ENCODE measurements at regions of chr2 and their contacts with region 1.

Region 1: GRCh38 chr2:222707689-222708525 is 36.4 kb downstream of the MOGAT1 start:
- DNase-seq: peak; percentile 62
- H3K4me3 ChIP-seq: no peak overlapping the region; a peak in 1 of 4 replicates
- H3K27ac ChIP-seq: peak overlapping the region in 1 of 2 experiments; percentile 21; a peak in 2 of 4 replicates
- H3K4me1 ChIP-seq: peaks cover 3 to 6% of the 10 kb centered on the region in 2 experiments; a peak in 2 of 4 replicates
- H3K27me3 ChIP-seq: no peaks in the 10 kb centered on the region
- CTCF ChIP-seq: peak; percentile 99
- EP300 ChIP-seq: no peak
- RAD21 ChIP-seq: peak; percentile 83

Region 2: DNA sequence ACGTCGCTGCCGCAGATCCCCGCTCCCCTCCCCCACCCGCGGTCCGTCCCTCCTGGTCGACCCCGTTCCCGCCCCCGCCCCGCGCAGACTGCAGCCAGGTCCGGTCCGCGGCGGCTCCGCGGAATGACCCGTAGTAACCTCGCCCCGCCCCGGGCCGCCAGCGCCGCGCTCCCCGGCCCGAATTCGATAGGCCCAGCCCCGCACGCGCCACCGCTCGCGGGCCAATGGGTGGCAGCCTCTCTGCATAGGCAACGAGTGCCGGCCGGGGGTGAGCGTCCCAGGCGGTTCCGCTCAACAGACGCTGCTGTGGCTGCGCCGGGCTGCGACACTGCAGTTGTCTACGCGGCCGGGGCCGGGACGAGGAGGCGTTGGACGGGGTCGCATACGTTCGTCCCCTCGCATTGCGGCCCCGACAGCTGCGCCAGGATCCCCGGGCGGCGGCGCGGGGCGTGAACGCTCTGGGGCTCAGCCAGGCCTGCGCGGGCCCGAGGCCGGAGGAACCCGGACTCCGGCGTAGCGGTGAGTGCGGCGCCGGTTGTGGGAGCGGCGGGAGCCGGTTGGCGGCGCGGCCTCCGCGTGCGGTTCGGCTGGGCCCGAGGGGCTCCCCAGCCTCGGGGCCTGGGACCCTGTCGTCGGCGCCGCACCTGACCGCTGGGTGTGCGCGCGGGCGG is 153.0 kb after region 1 on chr2 and contains the start of gene ACSL3:
- CTCF ChIA-PET with region 1: interaction called, 59 read pairs
- POLR2A ChIA-PET with region 1: no interaction called
- DNase-seq: peak; percentile 97
- H3K4me3 ChIP-seq: peak within 1 kb of the TSS; percentile 69 to 95
- H3K27ac ChIP-seq: peak within 1 kb of the TSS; percentile 68 to 95
- H3K4me1 ChIP-seq: peaks cover 25 to 30% of the 10 kb centered on the region in 2 experiments
- H3K27me3 ChIP-seq: no peaks in the 10 kb centered on the region
- CTCF ChIP-seq: no peak; the same call in 1 of the 2 replicates
- EP300 ChIP-seq: peak in 1 of 2 experiments; percentile 31; a peak in 1 of 4 replicates
- RAD21 ChIP-seq: no peak; the same call in 1 of the 2 replicates
- polyA plus RNA-seq, gene ACSL3: 15.7 and 25.2 TPM in 2 replicates

Region 3: DNA sequence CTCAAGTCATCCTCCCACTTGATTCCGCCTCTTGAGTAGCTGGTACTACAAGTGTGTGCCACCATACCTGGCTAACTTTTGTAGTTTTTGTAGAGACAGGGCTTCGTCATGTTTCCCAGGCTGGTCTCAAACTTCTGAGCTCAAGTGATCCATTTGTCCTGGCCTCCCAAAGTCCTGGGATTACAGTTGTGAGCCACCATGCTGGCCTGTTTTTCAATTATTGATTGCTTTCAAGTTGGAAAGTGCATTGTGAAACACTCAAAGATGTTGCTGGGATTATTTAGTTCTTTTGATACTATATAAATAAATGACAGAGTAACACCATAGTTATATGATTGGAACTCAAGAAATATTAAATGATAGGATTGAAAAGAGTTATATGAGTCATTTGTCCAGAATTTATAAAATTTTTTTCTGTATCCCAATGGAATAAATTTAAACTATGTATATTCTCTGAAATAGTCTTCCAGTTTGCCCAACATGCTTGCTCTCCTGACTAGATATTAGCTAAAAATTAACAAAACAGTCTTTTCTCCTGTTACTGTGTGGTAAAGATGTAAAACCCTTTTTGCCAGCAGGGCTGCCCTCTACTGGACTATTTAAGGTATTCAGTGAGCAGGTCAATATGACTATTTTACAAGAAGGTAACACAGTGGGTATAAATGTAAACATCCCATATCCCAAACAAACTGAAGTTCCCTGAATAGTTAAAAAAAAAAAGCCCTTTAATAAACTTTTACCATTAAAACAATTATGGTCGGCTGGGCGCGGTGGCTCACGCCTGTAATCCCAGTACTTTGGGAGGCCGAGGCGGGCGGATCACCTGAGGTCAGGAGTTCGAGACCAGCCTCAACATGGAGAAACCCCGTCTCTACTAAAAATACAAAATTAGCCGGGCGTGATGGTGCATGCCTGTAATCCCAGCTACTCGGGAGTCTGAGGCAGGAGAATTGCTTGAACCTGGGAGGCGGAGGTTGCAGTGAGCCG is 195.6 kb after region 1 on chr2:
- CTCF ChIA-PET with region 1: interaction called, 115 read pairs
- POLR2A ChIA-PET with region 1: no interaction called
- DNase-seq: peak; percentile 63
- H3K4me3 ChIP-seq: no peak overlapping the region
- H3K27ac ChIP-seq: peak overlapping the region in 1 of 2 experiments; percentile 82; a peak in 2 of 4 replicates
- H3K4me1 ChIP-seq: peaks cover 0 to 24% of the 10 kb centered on the region in 2 experiments; a peak in 1 of 4 replicates
- H3K27me3 ChIP-seq: no peaks in the 10 kb centered on the region
- CTCF ChIP-seq: peak; percentile 89
- EP300 ChIP-seq: no peak
- RAD21 ChIP-seq: peak; percentile 87

Region 4: GRCh38 chr2:222912117-222912516 is 204.2 kb after region 1 on chr2:
- CTCF ChIA-PET with region 1: interaction called, 115 read pairs
- POLR2A ChIA-PET with region 1: no interaction called
- DNase-seq: no peak
- H3K4me3 ChIP-seq: no peak overlapping the region
- H3K27ac ChIP-seq: no peak overlapping the region
- H3K4me1 ChIP-seq: peaks cover 0 to 20% of the 10 kb centered on the region in 2 experiments; a peak in 2 of 4 replicates
- H3K27me3 ChIP-seq: no peaks in the 10 kb centered on the region
- CTCF ChIP-seq: no peak
- EP300 ChIP-seq: no peak
- RAD21 ChIP-seq: no peak

Region 5: GRCh38 chr2:222939208-222939856 is 231.4 kb after region 1 on chr2:
- CTCF ChIA-PET with region 1: interaction called, 16 read pairs
- POLR2A ChIA-PET with region 1: no interaction called
- DNase-seq: peak; percentile 35
- H3K4me3 ChIP-seq: peak overlapping the region in 1 of 2 experiments; percentile 32; a peak in 1 of 4 replicates
- H3K27ac ChIP-seq: no peak overlapping the region
- H3K4me1 ChIP-seq: peaks cover 0 to 21% of the 10 kb centered on the region in 2 experiments; a peak in 2 of 4 replicates
- H3K27me3 ChIP-seq: no peaks in the 10 kb centered on the region
- CTCF ChIP-seq: peak; percentile 66
- EP300 ChIP-seq: no peak
- RAD21 ChIP-seq: peak; percentile 59

Measured in SK-N-SH (cell line).